Common myeloid progenitor, CD34-positive (primary cell): ENCODE measurements at regions of chr2 and their contacts with region 1.

Region 1: DNA sequence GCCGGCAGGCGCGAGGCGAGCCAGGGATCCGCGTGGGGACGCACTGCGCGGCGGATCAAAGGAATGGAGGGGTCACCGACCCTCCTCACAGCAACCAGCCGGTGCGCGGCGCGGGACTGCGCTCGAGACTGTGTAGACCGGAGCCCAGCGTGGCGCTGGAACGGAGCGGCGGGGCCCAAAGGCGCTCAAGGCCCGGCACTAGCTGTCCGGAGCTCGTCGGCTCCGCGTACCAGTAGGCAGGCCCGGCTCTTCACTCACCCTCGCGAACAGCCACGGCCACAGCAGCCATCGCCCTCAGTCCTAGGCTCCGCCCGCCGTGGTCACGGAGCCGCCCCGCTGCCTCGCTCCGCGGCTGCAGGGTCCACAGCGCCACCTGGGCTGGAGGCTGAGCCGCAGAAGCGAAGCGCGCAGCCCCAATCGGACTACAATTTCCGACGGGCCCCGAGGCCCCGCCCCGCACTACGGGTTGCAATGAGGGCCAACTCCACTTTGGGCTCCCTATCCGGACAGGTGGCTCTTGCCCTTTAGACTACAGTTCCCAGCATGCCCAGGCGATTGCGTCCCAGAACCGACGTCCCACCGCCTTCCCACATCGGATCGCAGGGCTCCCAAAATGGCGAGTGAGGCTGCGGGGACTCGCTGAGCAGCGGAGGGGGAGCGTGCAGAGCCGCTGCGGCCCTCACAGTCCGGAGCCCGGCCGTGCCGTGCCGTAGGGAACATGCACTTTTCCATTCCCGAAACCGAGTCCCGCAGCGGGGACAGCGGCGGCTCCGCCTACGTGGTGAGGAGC is at the starts of genes EIF2B4 and SNX17:
- DNase-seq: peak; percentile 99
- H3K4me3 ChIP-seq: peak within 1 kb of the TSS; percentile 84 to 98 (median 96)
- H3K27ac ChIP-seq: peak within 1 kb of the TSS; percentile 90 to 94
- H3K4me1 ChIP-seq: peaks cover 14 to 35% (median 28%) of the 10 kb centered on the region in 4 experiments
- H3K27me3 ChIP-seq: no peaks in the 10 kb centered on the region

Region 2: GRCh38 chr2:27322766-27323595 is 47.2 kb before region 1 on chr2 and contains the start of gene MPV17:
- CTCF ChIA-PET with region 1: interaction called, 11 read pairs
- POLR2A ChIA-PET with region 1: no interaction called
- DNase-seq: peak; percentile 82 to 89 (median 86)
- H3K4me3 ChIP-seq: peak within 1 kb of the TSS; percentile 85 to 99 (median 93)
- H3K27ac ChIP-seq: peak within 1 kb of the TSS; percentile 98 to 99
- H3K4me1 ChIP-seq: peaks cover 9 to 22% (median 15%) of the 10 kb centered on the region in 4 experiments
- H3K27me3 ChIP-seq: no peaks in the 10 kb centered on the region

Region 3: DNA sequence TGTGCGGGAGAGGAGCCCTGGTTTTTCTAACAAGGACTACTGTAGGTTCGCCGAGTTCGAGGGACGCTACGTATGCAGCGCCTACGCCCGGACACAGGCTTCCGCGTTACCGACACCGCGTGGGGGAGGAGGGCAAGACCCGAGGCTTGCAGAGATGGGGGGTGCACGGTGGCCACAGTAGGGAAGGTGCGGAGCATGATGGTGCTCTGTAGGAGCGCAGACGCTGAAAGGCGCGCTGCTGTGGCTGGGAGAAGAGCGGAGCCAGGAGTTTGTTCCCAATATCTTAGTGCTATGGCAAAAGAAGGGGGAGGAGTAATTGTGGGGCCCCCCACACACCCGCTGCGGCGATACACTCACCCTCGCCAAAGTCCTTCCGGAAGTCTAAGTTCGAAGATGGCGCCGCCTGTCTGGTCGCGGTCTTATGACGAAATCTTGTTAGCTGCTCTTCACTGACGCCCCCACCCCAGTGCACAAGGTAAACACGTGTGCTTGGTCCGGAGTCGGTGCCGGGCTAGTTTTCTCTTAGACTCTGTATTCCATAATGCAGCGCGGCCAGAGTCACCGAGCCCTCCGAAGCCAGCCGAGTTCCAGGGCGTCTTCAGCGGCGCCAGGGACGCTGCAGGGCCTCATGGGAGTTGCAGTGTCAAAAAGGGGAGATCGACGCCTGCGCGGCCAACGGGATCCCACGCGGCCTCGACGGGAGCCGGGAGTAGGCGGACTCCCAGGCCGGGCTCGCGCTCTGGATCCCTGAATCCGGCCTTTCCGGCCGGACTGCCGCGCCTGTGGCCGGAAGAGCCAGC is 13.6 kb before region 1 on chr2 and contains the start of gene GTF3C2:
- CTCF ChIA-PET with region 1: interaction called, 8 read pairs
- POLR2A ChIA-PET with region 1: interaction called, 10 read pairs
- DNase-seq: peak; percentile 99 to 100 (median 99)
- H3K4me3 ChIP-seq: peak within 1 kb of the TSS; percentile 79 to 99 (median 91)
- H3K27ac ChIP-seq: peak within 1 kb of the TSS; percentile 85 to 96
- H3K4me1 ChIP-seq: peaks cover 12 to 34% (median 26%) of the 10 kb centered on the region in 4 experiments
- H3K27me3 ChIP-seq: no peaks in the 10 kb centered on the region

Region 4: DNA sequence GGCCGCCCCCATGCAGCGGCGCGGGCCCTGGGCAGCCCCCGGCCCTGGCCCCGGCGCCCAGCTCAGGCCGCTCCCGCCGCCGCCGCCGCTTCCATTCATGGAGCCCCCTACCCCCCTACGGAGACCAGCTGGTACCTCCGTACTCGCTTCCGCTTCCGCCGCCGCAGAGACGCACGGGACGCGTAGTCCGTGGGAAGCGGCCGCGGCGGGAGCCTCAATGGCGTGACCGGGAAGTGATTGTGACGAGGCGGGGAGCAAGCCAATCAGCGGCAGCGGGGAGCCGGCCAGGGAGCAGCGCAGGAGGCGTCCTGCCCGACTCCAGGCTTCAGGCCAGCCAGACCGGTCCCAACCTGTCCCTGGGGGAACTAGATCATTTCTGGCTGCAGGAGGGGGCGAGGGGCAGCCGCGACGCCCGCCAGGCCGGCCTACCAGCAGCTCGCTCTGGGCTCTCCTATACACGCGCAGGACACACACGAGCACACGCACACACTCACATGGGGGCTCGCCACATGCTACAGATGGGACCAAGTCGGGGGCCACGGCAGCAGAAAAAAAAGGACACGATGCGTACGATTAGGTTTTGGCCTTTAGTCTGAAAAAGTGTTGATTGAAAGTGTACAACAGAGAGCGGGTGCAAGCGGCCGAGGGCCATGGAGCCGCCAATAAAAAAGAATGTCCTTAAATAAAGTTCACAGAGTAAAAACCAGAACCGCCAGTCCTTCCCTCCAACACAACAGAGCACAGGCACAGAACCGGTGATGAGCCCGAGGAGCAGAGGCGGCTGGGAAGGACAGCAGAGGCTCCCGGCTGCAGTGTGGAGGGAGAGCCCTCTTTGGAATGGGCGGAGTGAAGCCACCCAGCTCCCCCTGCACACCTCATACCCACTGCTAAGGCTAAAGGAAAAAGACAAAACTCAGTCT is 10.7 kb after region 1 on chr2 and contains the start of gene ZNF513:
- CTCF ChIA-PET with region 1: interaction called, 7 read pairs
- POLR2A ChIA-PET with region 1: interaction called, 15 read pairs
- DNase-seq: peak; percentile 91 to 94 (median 92)
- H3K4me3 ChIP-seq: peak within 1 kb of the TSS; percentile 67 to 86 (median 81)
- H3K27ac ChIP-seq: peak within 1 kb of the TSS; percentile 81 to 92
- H3K4me1 ChIP-seq: peaks cover 12 to 27% (median 18%) of the 10 kb centered on the region in 4 experiments
- H3K27me3 ChIP-seq: no peaks in the 10 kb centered on the region